PC-3 (cell line): ENCODE measurements at regions of chr11 and their contacts with region 1.

Region 1: DNA sequence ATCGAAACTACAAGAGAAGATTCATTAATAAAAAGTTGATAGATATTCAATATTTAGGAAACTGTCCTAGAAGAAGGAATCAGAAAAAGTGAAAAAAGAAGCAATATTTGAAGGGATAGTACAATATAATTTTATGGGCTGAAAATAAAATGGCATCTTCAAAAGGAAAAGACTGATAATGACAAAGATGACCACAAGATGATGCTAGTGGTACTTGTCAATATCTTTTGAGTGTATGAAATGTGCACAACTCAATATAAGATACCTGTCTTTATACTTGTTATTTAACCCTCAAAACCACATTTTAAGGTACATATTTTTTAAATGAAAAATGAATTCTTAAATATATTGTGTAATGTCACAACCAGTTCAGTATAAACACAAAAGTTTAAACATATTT is 1059.6 kb upstream of the RAG2 start:
- DNase-seq: peak; percentile 57
- ATAC-seq: 0 out of 2 replicates have a peak, but pooled peaks have one; percentile 24
- H3K4me3 ChIP-seq: no peak overlapping the region
- H3K27ac ChIP-seq: no peak overlapping the region
- H3K4me1 ChIP-seq: no peaks in the 10 kb centered on the region
- H3K27me3 ChIP-seq: no peaks in the 10 kb centered on the region
- CTCF ChIP-seq: peak; percentile 65

Region 2: GRCh38 chr11:37788141-37788877 is 130.7 kb after region 1 on chr11:
- CTCF ChIA-PET with region 1: interaction called, 3 read pairs
- POLR2A ChIA-PET with region 1: no interaction called
- intact Hi-C with region 1: loop called (anchors 5 kb)
- DNase-seq: peak; percentile 89
- ATAC-seq: peak; percentile 91
- H3K4me3 ChIP-seq: no peak overlapping the region
- H3K27ac ChIP-seq: peak overlapping the region; percentile 91
- H3K4me1 ChIP-seq: peaks cover 21% of the 10 kb centered on the region
- H3K27me3 ChIP-seq: no peaks in the 10 kb centered on the region
- CTCF ChIP-seq: no peak

Region 3: GRCh38 chr11:37946155-37946766 is 288.6 kb after region 1 on chr11:
- CTCF ChIA-PET with region 1: no interaction called
- POLR2A ChIA-PET with region 1: no interaction called
- intact Hi-C with region 1: loop called (anchors 5 kb)
- DNase-seq: peak; percentile 54
- ATAC-seq: 0 out of 2 replicates have a peak, but pooled peaks have one; percentile 31
- H3K4me3 ChIP-seq: no peak overlapping the region
- H3K27ac ChIP-seq: no peak overlapping the region
- H3K4me1 ChIP-seq: peaks cover 11% of the 10 kb centered on the region
- H3K27me3 ChIP-seq: no peaks in the 10 kb centered on the region
- CTCF ChIP-seq: peak; percentile 69

Region 4: DNA sequence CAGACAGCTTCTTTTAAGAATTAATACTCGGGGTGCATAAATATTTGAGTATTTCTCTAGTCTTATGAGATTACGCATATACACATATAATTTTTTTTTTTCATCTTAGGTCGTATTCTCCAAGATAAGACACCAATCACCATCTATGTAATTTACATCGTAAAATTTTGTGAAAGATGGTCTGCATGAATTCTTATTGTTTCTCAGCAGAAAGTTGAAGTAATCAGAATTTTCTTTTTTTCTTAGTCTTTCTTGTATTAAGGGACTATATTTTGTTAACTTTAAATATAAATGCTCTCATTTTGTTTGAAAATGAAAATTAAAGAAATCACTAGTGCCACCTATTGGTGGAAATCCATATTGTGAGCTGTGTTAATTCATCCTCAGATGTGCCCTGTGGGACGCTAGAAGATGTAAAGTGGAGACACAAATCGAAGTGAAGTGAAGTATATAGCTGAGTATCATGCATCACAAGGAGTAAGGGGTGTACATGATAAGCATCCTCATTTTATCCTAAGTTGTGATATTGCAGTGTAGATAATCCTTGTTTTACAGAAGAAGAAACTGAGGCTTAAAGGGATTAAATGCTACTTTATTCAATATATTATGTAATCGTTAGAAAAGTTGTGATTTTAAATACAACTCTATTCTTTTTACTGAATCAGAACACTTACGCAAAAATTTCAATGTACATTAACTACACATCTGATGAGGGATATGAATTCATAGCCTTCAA is 1717.5 kb after region 1 on chr11:
- CTCF ChIA-PET with region 1: no interaction called
- POLR2A ChIA-PET with region 1: no interaction called
- intact Hi-C with region 1: loop called (anchors 5 kb)
- DNase-seq: peak; percentile 67
- ATAC-seq: peak; percentile 43
- H3K4me3 ChIP-seq: no peak overlapping the region
- H3K27ac ChIP-seq: no peak overlapping the region
- H3K4me1 ChIP-seq: no peaks in the 10 kb centered on the region
- H3K27me3 ChIP-seq: no peaks in the 10 kb centered on the region
- CTCF ChIP-seq: peak; percentile 73